ENCODE measurements at regions of chr2 and their contacts with region 1.

Region 1: GRCh38 chr2:105426626-105427292 is 27.9 kb upstream of the FHL2 start:
- DNase-seq: peak in 6 of 9 donors; percentile 11 to 35 (median 24)
- ATAC-seq: peak; percentile 67
- H3K4me3 ChIP-seq: peak overlapping the region; percentile 34
- H3K4me3 Mint-ChIP-seq: peak overlapping the region; percentile 1 to 85 (median 73)
- H3K27ac ChIP-seq: no peak overlapping the region
- H3K27ac Mint-ChIP-seq: peak overlapping the region in 7 of 9 donors; percentile 6 to 87 (median 61)
- H3K4me1 ChIP-seq: peaks cover 8 to 22% of the 10 kb centered on the region in 2 donors
- H3K4me1 Mint-ChIP-seq: peaks cover 17 to 33% (median 24%) of the 10 kb centered on the region in 7 donors
- H3K27me3 ChIP-seq: no peaks in the 10 kb centered on the region
- H3K27me3 Mint-ChIP-seq: peaks cover 0 to 30% (median 8%) of the 10 kb centered on the region in 5 donors

Region 2: GRCh38 chr2:105468582-105469042 is 41.9 kb after region 1 on chr2:
- CTCF ChIA-PET with region 1: no interaction called
- POLR2A ChIA-PET with region 1: no interaction called
- intact Hi-C with region 1: loop called in 1 of 2 experiments (anchors 5 kb)
- DNase-seq: peak in 1 of 9 donors; percentile 15
- ATAC-seq: peak; percentile 48
- H3K4me3 ChIP-seq: no peak overlapping the region
- H3K4me3 Mint-ChIP-seq: peak overlapping the region; percentile 5 to 85 (median 70)
- H3K27ac ChIP-seq: no peak overlapping the region
- H3K27ac Mint-ChIP-seq: peak overlapping the region in 8 of 9 donors; percentile 11 to 86 (median 78)
- H3K4me1 ChIP-seq: peaks cover 0 to 8% of the 10 kb centered on the region in 2 donors
- H3K4me1 Mint-ChIP-seq: peaks cover 7 to 37% (median 28%) of the 10 kb centered on the region in 7 donors
- H3K27me3 ChIP-seq: no peaks in the 10 kb centered on the region
- H3K27me3 Mint-ChIP-seq: peaks cover 0 to 8% (median 0%) of the 10 kb centered on the region in 5 donors

Region 3: GRCh38 chr2:105521205-105521604 is 94.4 kb after region 1 on chr2:
- CTCF ChIA-PET with region 1: no interaction called
- POLR2A ChIA-PET with region 1: no interaction called
- intact Hi-C with region 1: no loop called
- DNase-seq: peak in 4 of 9 donors; percentile 8 to 16 (median 16)
- ATAC-seq: no peak
- H3K4me3 ChIP-seq: no peak overlapping the region
- H3K4me3 Mint-ChIP-seq: no peak overlapping the region
- H3K27ac ChIP-seq: no peak overlapping the region
- H3K27ac Mint-ChIP-seq: no peak overlapping the region
- H3K4me1 ChIP-seq: no peaks in the 10 kb centered on the region
- H3K4me1 Mint-ChIP-seq: no peaks in the 10 kb centered on the region
- H3K27me3 ChIP-seq: no peaks in the 10 kb centered on the region
- H3K27me3 Mint-ChIP-seq: peaks cover 0 to 6% (median under 1%) of the 10 kb centered on the region in 5 donors